AG04449 (cell line): ENCODE measurements at regions of chr9 and their contacts with region 1.

Region 1: DNA sequence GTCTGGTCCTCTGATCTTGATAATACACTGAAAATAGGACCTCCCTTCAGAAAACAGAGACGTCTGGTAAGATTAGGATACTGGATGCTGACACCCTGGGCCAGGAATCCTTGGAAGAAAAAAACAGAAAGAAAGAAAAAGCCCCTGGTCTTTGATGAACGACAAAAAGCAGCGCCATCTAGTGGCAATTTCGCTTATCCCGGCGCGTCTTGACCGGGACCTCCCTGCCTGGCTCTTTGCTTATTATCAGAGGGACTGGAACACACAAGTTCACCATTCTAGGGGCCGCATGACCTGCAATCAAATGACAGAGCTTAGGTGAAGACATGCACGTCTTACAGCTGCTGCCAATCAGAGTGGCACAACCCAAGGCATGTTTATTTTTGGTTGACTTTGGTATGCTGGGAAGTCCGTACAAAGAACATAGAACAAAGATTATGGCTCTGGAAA is 114.9 kb upstream of the NFIB start:
- DNase-seq: no peak
- H3K4me3 ChIP-seq: no peak overlapping the region
- CTCF ChIP-seq: peak; percentile 68

Region 2: DNA sequence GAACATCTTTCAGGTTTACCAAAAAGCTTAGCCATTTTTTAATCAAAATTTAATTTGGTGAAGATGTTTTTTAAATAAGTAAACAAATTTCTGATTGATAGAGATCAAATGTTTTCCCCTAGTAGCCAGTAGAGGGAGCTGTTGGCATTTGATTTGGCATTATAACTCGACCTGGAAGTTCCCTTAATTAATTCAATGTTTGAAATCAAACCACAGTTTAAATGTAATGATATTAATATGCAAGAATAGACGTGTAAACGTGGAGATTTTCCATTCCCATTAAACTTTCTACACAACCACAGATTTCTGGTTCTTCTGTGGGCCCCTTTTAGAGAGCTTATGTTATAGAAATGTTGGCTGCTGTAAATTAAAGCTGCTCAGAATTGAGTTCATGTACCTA is 1001.2 kb before region 1 on chr9:
- CTCF ChIA-PET with region 1: interaction called, 22 read pairs
- POLR2A ChIA-PET with region 1: no interaction called
- DNase-seq: no peak
- H3K4me3 ChIP-seq: no peak overlapping the region
- CTCF ChIP-seq: peak; percentile 31

Region 3: GRCh38 chr9:14400658-14400995 is 28.2 kb before region 1 on chr9:
- CTCF ChIA-PET with region 1: interaction called, 35 read pairs
- POLR2A ChIA-PET with region 1: no interaction called
- DNase-seq: no peak
- H3K4me3 ChIP-seq: no peak overlapping the region
- CTCF ChIP-seq: peak; percentile 13

Region 4: GRCh38 chr9:14412775-14413174 is 16.0 kb before region 1 on chr9:
- CTCF ChIA-PET with region 1: interaction called, 10 read pairs
- POLR2A ChIA-PET with region 1: no interaction called
- DNase-seq: no peak
- H3K4me3 ChIP-seq: no peak overlapping the region
- CTCF ChIP-seq: no peak

Region 5: GRCh38 chr9:14418301-14418940 is 10.4 kb before region 1 on chr9:
- CTCF ChIA-PET with region 1: interaction called, 15 read pairs
- POLR2A ChIA-PET with region 1: no interaction called
- DNase-seq: no peak
- H3K4me3 ChIP-seq: no peak overlapping the region
- CTCF ChIP-seq: no peak